Right cardiac atrium (tissue), 5 donors: ENCODE measurements at regions of chr16 and their contacts with region 1.

Region 1: GRCh38 chr16:21158208-21159110 is at the start of gene LDAF1:
- DNase-seq: peak; percentile 88 to 96 (median 95)
- ATAC-seq: peak; percentile 95 to 96
- H3K4me3 ChIP-seq: peak within 1 kb of the TSS; percentile 98
- H3K27ac ChIP-seq: peak within 1 kb of the TSS; percentile 92
- H3K4me1 ChIP-seq: peaks cover 3% of the 10 kb centered on the region
- H3K27me3 ChIP-seq: no peaks in the 10 kb centered on the region
- total RNA-seq, gene LDAF1: 71.8 to 116 (median 79.7) TPM

Region 2: DNA sequence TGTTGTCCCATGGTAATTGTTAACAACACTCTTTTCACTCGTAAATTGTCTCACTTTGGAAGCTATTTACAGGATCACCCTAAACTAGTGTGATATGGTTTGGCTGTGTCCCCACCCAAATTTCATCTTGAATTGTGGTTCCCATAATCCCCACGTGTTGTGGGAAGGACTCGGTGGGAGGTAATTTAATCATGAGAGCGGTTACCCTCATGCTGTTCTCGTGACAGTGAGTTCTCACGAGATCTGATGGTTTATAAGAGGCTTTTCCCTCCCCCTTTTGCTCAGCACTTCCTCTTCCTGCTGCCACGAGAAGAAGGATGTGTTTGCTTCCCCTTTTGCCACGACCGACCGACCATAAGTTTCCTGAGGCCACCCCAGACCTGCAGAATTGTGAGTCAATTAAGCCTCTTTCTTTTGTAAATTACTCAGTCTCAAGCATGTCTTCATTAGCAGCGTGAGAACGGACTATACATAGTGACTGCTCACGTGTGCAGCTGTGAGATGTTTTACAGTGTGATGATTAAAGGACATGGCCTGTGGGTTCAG is 42.2 kb before region 1 on chr16:
- intact Hi-C with region 1: no loop called
- DNase-seq: no peak
- ATAC-seq: peak in 1 of 2 donors; percentile 72
- H3K4me3 ChIP-seq: peak overlapping the region; percentile 37
- H3K27ac ChIP-seq: no peak overlapping the region
- H3K4me1 ChIP-seq: no peaks in the 10 kb centered on the region
- H3K27me3 ChIP-seq: no peaks in the 10 kb centered on the region

Region 3: GRCh38 chr16:21277927-21278706 is 119.7 kb after region 1 on chr16 and contains the start of gene CRYM:
- intact Hi-C with region 1: loop called in 1 of 4 experiments (anchors 10 kb)
- DNase-seq: peak; percentile 64 to 88 (median 88)
- ATAC-seq: peak; percentile 92 to 95
- H3K4me3 ChIP-seq: peak within 1 kb of the TSS; percentile 46
- H3K27ac ChIP-seq: peak within 1 kb of the TSS; percentile 76
- H3K4me1 ChIP-seq: no peaks in the 10 kb centered on the region
- H3K27me3 ChIP-seq: no peaks in the 10 kb centered on the region
- total RNA-seq, gene CRYM: 108 to 143 (median 124) TPM

Region 4: GRCh38 chr16:21300309-21301167 is 142.1 kb after region 1 on chr16:
- intact Hi-C with region 1: loop called in 1 of 4 experiments (anchors 10 kb)
- DNase-seq: peak; percentile 90 to 95 (median 94)
- ATAC-seq: peak; percentile 96 to 98
- H3K4me3 ChIP-seq: peak overlapping the region; percentile 43
- H3K27ac ChIP-seq: peak overlapping the region; percentile 55
- H3K4me1 ChIP-seq: no peaks in the 10 kb centered on the region
- H3K27me3 ChIP-seq: no peaks in the 10 kb centered on the region

Region 5: GRCh38 chr16:21554795-21555585 is 396.5 kb after region 1 on chr16:
- intact Hi-C with region 1: loop called in 1 of 4 experiments (anchors 10 kb)
- DNase-seq: peak; percentile 90 to 95 (median 95)
- ATAC-seq: peak; percentile 76 to 83
- H3K4me3 ChIP-seq: no peak overlapping the region
- H3K27ac ChIP-seq: no peak overlapping the region
- H3K4me1 ChIP-seq: no peaks in the 10 kb centered on the region
- H3K27me3 ChIP-seq: no peaks in the 10 kb centered on the region